ENCODE measurements at regions of chr1 and their contacts with region 1.

Region 1: GRCh38 chr1:204041232-204041767 is 31.6 kb upstream of the SOX13 start:
- DNase-seq: no peak
- ATAC-seq: peak; percentile 72

Region 2: GRCh38 chr1:203968728-203969127 is 72.6 kb before region 1 on chr1:
- intact Hi-C with region 1: loop called (anchors 5 kb)
- DNase-seq: no peak
- ATAC-seq: no peak

Region 3: GRCh38 chr1:203996126-203996525 is 45.2 kb before region 1 on chr1:
- intact Hi-C with region 1: loop called (anchors 10 kb)
- DNase-seq: no peak
- ATAC-seq: no peak

Region 4: GRCh38 chr1:204072931-204073836 is 31.9 kb after region 1 on chr1 and contains the start of gene SOX13:
- intact Hi-C with region 1: loop called (anchors 2 kb)
- DNase-seq: peak; percentile 92
- ATAC-seq: peak; percentile 84
- total RNA-seq, gene SOX13: 12.1 TPM

Region 5: GRCh38 chr1:204417231-204417997 is 376.1 kb after region 1 on chr1:
- intact Hi-C with region 1: no loop called
- DNase-seq: no peak
- ATAC-seq: peak; percentile 78